ENCODE measurements at regions of chr2 and their contacts with region 1.

Region 1: DNA sequence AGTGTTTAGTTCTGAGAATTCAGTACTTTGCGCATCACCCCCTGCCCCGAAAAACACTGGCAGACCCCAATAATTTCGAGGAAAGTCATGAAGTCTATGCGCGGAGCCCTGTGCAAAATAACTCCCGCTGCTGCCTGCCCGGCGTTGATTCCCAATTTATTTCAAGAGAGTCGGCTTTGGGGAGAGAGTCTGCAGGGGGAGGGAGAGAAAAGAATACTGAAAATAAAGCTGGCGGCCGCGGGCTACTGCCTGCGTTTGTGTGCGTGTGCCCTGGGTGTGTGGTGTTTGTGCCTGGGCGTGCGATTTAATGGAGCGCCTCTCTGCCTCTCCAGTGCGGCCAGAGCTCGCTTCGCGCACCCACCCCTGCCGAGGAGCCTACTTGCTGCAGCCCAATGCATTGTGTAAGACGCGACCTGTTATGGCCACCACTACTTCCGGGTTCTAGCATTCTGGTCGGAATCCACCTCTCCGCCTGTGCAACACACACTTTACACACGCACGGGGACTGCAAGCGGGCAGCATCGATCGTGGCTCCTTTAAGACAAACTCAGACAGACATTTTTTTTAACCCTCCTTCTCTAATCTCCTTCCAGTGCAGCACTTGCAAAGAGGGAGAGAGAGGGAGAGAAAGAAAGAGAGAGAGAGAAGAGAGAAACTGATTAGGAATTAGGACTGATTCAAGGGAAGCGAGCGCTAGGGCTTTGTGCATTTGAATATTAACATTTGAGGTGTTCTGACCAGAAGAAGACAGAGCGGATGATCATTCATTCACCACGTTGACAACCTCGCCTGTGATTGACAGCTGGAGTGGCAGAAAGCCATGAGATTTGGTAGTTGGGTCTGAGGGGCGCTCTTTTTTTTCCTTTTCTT is at the start of gene MEIS1:
- DNase-seq: no peak
- ATAC-seq: peak; percentile 95
- H3K4me3 ChIP-seq: peak within 1 kb of the TSS; percentile 57; the same call in 1 of the 2 replicates
- H3K27ac ChIP-seq: no peak within 1 kb of the TSS
- H3K4me1 ChIP-seq: no peaks in the 10 kb centered on the region
- H3K27me3 ChIP-seq: peaks cover 9 to 34% of the 10 kb centered on the region in 2 experiments
- CTCF ChIP-seq: no peak
- EP300 ChIP-seq: no peak
- POLR2A ChIP-seq: no peak
- RAD21 ChIP-seq: no peak
- polyA plus RNA-seq, gene MEIS1: 0.04 TPM in 1 of 2 experiments, not detected in the other

Region 2: GRCh38 chr2:66574701-66575624 is 140.0 kb after region 1 on chr2:
- CTCF ChIA-PET with region 1: no interaction called
- POLR2A ChIA-PET with region 1: no interaction called
- RAD21 ChIA-PET with region 1: no interaction called
- SMC1A ChIA-PET with region 1: no interaction called
- in situ Hi-C with region 1: no loop called
- intact Hi-C with region 1: loop called (anchors 2 kb)
- DNase-seq: no peak
- ATAC-seq: no peak
- H3K4me3 ChIP-seq: no peak overlapping the region
- H3K27ac ChIP-seq: no peak overlapping the region
- H3K4me1 ChIP-seq: no peaks in the 10 kb centered on the region
- H3K27me3 ChIP-seq: peaks cover 4 to 11% of the 10 kb centered on the region in 2 experiments; a peak in 3 of 4 replicates
- CTCF ChIP-seq: peak in 1 of 3 experiments; percentile 14; a peak in 2 of 6 replicates
- EP300 ChIP-seq: no peak
- POLR2A ChIP-seq: no peak
- RAD21 ChIP-seq: peak; percentile 41